Activated CD4-positive, alpha-beta T cell treated with anti-CD3 and anti-CD28 coated beads, Interleukin-2, amount 10 ng/mL, durations not matched to agents 24 days and 14 days (primary cell): ENCODE measurements at regions of chr1 and their contacts with region 1.

Region 1: GRCh38 chr1:64268653-64269557 is 65.5 kb downstream of the UBE2U start:
- DNase-seq: peak; percentile 88
- H3K4me3 Mint-ChIP-seq: no peak overlapping the region
- H3K27ac Mint-ChIP-seq: no peak overlapping the region
- H3K4me1 Mint-ChIP-seq: no peaks in the 10 kb centered on the region
- H3K27me3 Mint-ChIP-seq: peaks cover 10% of the 10 kb centered on the region

Region 2: GRCh38 chr1:64327119-64327518 is 58.2 kb after region 1 on chr1:
- intact Hi-C with region 1: no loop called
- DNase-seq: no peak
- H3K4me3 Mint-ChIP-seq: no peak overlapping the region
- H3K27ac Mint-ChIP-seq: no peak overlapping the region
- H3K4me1 Mint-ChIP-seq: no peaks in the 10 kb centered on the region
- H3K27me3 Mint-ChIP-seq: peaks cover 2% of the 10 kb centered on the region

Region 3: DNA sequence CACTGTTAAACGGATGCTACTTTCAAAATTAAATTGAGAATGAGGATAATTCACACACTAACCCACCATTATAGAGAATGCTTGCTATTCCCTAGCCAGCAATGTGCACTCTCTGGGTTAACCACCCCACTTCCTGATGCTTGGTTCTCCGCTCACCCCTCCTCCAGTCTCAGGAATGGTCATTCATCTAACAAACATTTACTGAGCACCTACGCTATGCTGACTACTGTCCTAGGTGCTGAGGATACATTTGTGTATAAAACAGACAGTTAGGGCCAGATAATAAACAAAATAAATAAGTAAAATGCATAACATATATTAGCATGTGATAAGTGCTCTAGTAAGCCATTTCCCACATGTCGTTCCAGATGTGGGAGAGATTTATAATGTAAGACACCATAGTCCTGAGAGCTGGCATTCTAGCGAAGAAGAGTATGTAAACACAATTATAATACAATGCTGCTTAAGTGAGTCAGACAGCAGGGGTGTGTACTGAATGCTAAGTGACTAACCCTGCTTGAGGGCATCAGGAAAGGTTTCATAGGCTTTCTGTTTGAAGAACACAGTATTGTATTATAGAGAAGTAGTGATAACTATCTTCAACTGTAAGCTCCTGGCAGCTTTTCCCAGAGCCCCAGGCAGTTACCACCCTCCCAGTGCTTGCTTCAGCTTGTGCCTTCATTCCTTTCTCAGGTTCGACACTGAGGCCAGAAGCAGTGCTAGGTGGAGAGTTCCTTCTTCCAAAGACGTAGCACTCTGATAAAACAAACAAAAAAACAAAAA is 74.4 kb after region 1 on chr1:
- intact Hi-C with region 1: no loop called
- DNase-seq: no peak
- H3K4me3 Mint-ChIP-seq: no peak overlapping the region
- H3K27ac Mint-ChIP-seq: no peak overlapping the region
- H3K4me1 Mint-ChIP-seq: no peaks in the 10 kb centered on the region
- H3K27me3 Mint-ChIP-seq: no peaks in the 10 kb centered on the region

Region 4: DNA sequence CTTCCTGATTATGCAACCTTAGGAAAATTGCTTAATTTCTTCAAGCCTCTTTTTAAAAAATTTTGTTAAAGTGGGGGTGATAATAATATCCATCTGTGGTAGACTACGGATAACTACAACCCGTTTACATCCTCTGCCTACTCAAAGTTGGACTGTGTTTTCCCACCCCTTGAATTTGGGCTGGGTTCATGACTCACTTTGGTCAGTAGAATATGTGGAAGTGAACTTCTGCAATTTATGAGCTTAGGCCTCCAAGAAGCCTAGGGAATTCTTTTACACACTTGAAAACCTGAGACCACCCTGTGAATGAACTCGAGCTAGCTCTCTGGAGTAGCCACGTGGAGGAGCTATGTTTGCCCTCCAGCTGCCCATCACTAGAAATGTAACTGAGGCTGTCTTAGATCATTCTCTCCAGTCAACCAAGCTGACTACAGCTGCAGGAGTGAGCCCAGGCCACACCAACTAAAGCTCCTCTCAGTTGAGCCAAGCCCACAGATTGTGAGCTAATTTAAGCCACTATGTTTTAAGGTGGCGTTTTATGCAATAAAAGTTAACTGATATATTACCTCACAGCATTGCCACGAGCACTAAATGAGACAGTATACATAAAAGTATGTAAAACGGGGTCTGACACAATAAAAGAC is 171.4 kb after region 1 on chr1:
- intact Hi-C with region 1: no loop called
- DNase-seq: no peak
- H3K4me3 Mint-ChIP-seq: no peak overlapping the region
- H3K27ac Mint-ChIP-seq: no peak overlapping the region
- H3K4me1 Mint-ChIP-seq: no peaks in the 10 kb centered on the region
- H3K27me3 Mint-ChIP-seq: peaks cover 2% of the 10 kb centered on the region

Region 5: GRCh38 chr1:64675718-64676345 is 406.9 kb after region 1 on chr1:
- intact Hi-C with region 1: loop called (anchors 1 kb)
- DNase-seq: no peak
- H3K4me3 Mint-ChIP-seq: no peak overlapping the region
- H3K27ac Mint-ChIP-seq: no peak overlapping the region
- H3K4me1 Mint-ChIP-seq: no peaks in the 10 kb centered on the region
- H3K27me3 Mint-ChIP-seq: peaks cover 1% of the 10 kb centered on the region

Region 6: DNA sequence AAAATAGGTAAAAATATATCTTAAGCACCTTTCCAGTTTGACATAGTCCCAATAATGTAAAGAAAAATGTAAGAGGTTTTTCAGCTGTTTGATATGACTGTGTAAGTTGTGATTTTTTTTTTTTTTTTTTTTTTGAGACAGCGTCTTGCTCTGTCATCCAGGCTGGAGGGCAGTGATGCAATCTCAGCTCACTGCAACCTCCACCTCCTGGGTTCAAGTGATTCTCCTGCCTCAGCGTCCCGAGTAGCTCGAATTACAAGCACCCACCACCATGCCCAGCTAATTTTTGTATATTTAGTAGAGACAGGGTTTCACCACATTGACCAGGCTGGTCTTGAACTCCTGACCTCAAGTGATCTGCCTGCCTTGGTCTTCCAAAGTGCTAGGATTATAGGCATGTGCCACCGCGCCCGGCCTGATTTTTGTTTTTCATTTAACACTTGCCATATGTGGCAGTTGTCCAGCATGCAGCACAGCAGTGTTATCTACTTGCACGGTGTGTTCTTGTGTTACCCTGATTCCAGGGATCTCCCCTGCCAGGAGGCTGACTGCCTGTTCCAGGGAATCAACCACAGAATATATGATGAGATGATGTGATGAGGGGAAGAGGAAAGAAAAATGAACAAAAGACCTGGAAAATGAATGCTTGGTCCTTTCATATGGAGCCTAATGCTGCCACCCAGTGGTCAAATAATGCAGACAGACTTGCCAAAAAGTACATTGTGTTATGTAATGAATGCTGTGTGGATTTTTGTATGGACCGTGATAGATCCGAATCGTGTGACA is 555.0 kb after region 1 on chr1:
- intact Hi-C with region 1: loop called (anchors 1 kb)
- DNase-seq: peak; percentile 88
- H3K4me3 Mint-ChIP-seq: no peak overlapping the region
- H3K27ac Mint-ChIP-seq: no peak overlapping the region
- H3K4me1 Mint-ChIP-seq: peaks cover 28% of the 10 kb centered on the region
- H3K27me3 Mint-ChIP-seq: peaks cover 3% of the 10 kb centered on the region

Region 7: GRCh38 chr1:65075123-65075976 is 806.4 kb after region 1 on chr1:
- intact Hi-C with region 1: loop called (anchors 10 kb)
- DNase-seq: peak; percentile 90
- H3K4me3 Mint-ChIP-seq: no peak overlapping the region
- H3K27ac Mint-ChIP-seq: no peak overlapping the region
- H3K4me1 Mint-ChIP-seq: peaks cover 5% of the 10 kb centered on the region
- H3K27me3 Mint-ChIP-seq: peaks cover 6% of the 10 kb centered on the region

Region 8: GRCh38 chr1:65687428-65688214 is 1418.7 kb after region 1 on chr1:
- intact Hi-C with region 1: loop called (anchors 5 kb)
- DNase-seq: peak; percentile 93
- H3K4me3 Mint-ChIP-seq: no peak overlapping the region
- H3K27ac Mint-ChIP-seq: no peak overlapping the region
- H3K4me1 Mint-ChIP-seq: peaks cover 5% of the 10 kb centered on the region
- H3K27me3 Mint-ChIP-seq: peaks cover 26% of the 10 kb centered on the region